ENCODE measurements at regions of chr6 and their contacts with region 1.

Region 1: DNA sequence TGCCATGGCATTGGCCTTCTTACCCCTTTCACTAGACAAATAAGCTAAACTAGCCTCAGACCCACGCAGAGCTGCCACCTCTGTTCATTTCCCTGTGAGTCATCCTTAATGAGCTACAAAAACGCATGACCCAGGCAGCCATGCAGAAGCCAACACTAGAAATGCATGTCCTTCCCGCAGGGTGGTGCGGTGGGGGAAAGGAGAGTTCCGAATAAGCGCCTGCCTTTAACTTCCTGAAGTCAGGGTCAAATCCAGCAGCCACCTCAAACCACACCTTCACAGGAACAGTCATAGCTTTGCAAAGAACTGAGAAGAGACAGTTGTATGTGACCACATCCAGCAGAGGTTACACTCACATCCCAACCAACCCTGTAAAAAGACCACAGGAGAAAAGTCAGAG is 40.4 kb downstream of the IRF4 start:
- DNase-seq: peak; percentile 70
- H3K4me3 Mint-ChIP-seq: peak overlapping the region; percentile 61
- H3K27ac Mint-ChIP-seq: peak overlapping the region; percentile 60
- H3K4me1 Mint-ChIP-seq: peaks cover 85% of the 10 kb centered on the region
- H3K27me3 Mint-ChIP-seq: no peaks in the 10 kb centered on the region

Region 2: GRCh38 chr6:385614-386013 is 46.4 kb before region 1 on chr6:
- intact Hi-C with region 1: no loop called
- DNase-seq: no peak
- H3K4me3 Mint-ChIP-seq: no peak overlapping the region
- H3K27ac Mint-ChIP-seq: no peak overlapping the region
- H3K4me1 Mint-ChIP-seq: peaks cover 39% of the 10 kb centered on the region
- H3K27me3 Mint-ChIP-seq: peaks cover 5% of the 10 kb centered on the region

Region 3: DNA sequence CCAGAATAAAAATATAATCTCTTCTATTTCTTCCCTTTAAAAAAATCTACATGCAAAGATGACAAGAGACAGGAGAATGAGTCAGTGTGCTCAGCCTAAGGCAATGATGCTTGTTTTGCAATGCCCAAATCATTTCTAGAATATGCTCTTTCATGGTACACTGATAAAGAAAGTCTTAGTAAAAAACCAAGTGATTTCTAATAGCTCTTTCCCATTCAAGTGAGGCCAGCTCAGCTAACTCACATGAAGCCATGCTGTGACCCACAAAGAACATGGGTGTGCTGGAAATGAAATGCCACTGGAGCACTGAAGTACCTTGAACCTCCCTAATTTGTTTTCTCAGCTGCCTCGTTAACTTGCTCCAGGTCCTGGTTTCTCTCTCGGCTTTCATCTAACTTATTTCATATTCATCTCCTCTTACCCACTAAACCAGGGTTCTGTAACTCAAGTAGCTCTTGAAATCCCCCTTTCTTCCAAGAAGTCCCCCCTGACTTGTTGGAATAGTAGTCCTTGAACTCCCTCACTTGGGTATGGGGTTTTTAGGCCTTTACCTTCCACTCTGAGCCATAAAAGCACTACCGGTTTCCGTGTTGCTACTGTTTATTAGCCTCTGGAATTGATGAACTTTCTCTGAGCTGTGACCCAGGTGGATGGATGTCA is 52.2 kb after region 1 on chr6:
- intact Hi-C with region 1: loop called (anchors 1 kb)
- DNase-seq: no peak
- H3K4me3 Mint-ChIP-seq: peak overlapping the region; percentile 38
- H3K27ac Mint-ChIP-seq: peak overlapping the region; percentile 85
- H3K4me1 Mint-ChIP-seq: peaks cover 65% of the 10 kb centered on the region
- H3K27me3 Mint-ChIP-seq: no peaks in the 10 kb centered on the region

Region 4: DNA sequence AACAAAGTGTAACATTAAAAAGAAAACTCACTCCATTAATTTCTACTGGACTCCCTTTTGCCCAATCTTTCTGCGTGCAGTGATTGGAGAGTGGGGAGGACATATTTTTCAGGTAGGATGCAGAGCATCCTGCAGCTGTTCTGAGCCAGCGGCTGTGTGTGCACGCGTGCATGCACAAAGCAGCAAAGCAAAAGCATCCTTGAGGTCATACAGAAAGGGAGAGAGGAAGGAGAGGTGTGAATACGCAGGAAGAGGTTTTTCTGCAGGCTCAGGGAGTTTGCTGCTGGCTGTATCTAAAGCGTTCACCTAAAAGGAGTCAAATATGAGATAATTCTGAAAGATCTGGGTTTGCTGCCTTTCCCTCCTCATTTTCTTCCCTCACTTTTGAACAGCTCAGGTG is 116.5 kb after region 1 on chr6:
- intact Hi-C with region 1: loop called (anchors 1 kb)
- DNase-seq: peak; percentile 43
- H3K4me3 Mint-ChIP-seq: peak overlapping the region; percentile 72
- H3K27ac Mint-ChIP-seq: peak overlapping the region; percentile 95
- H3K4me1 Mint-ChIP-seq: peaks cover 75% of the 10 kb centered on the region
- H3K27me3 Mint-ChIP-seq: no peaks in the 10 kb centered on the region

Region 5: DNA sequence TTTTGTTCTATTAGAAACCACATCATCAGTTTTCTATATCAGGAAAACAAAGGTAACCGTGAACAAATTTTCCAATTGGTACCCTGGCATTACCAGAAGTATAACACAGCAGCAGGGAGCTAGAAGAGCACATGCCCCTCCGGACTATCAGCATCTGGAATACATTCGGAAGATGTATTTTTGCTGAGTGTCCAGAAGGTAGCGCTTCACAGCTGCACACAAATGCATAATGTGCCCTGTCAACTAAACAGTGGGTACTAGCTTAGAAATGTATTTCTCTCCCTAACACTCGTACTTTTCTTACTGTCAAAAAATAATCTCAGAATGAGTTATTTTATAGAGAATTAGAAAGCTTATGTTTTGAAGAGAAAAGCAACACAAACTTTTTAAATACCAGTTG is 147.4 kb after region 1 on chr6:
- intact Hi-C with region 1: no loop called
- DNase-seq: no peak
- H3K4me3 Mint-ChIP-seq: no peak overlapping the region
- H3K27ac Mint-ChIP-seq: no peak overlapping the region
- H3K4me1 Mint-ChIP-seq: peaks cover 35% of the 10 kb centered on the region
- H3K27me3 Mint-ChIP-seq: no peaks in the 10 kb centered on the region